Cardiac septum (tissue), 1 donor: ENCODE measurements at regions of chr9 and their contacts with region 1.

Region 1: GRCh38 chr9:93962561-93963440 is 7.6 kb upstream of the BARX1 start:
- DNase-seq: peak; percentile 90

Region 2: DNA sequence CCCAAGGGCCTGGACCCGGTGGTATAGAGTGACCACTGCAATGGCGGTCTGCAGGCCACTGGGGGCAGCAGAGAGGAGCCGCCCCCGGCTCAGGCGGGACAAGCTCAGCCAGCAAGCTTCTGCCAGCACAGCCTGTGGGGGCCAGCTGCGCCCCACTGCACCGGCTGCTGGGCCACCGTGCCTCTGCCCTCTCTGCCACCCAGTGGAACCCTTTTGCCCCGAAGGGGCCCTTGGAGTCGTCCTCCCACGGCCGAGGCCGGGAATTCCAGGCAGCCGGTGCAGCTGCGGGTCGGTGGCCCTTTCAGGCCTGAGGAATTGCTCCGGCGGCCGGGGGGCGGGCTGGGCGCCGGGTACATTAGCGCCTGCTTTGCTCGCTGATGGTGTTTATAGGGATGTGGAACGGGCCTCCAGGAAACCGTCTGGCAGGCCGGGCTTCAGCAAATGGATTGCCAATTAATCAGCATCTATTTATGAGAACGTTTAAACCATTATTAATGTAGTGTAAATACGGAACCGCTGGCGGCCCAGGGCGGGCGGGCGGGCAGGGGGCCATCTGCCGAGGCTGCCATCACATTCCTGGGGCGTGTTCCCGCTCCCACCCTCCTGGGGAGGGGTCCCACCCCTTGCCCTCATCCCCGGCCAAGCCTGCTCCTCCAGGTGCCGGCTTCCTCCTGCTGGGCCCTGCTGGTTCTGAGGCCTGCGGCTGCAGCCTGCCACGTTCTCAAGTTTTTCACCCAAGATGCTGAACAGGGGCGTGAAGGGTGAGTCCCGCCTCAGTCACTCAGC is 135.1 kb before region 1 on chr9:
- intact Hi-C with region 1: loop called (anchors 10 kb)
- DNase-seq: no peak

Region 3: GRCh38 chr9:93843396-93843795 is 119.4 kb before region 1 on chr9:
- intact Hi-C with region 1: no loop called
- DNase-seq: no peak

Region 4: GRCh38 chr9:93930070-93930469 is 32.7 kb before region 1 on chr9:
- intact Hi-C with region 1: no loop called
- DNase-seq: no peak